Naive thymus-derived CD8-positive, alpha-beta T cell (primary cell): ENCODE measurements at regions of chr1 and their contacts with region 1.

Region 1: DNA sequence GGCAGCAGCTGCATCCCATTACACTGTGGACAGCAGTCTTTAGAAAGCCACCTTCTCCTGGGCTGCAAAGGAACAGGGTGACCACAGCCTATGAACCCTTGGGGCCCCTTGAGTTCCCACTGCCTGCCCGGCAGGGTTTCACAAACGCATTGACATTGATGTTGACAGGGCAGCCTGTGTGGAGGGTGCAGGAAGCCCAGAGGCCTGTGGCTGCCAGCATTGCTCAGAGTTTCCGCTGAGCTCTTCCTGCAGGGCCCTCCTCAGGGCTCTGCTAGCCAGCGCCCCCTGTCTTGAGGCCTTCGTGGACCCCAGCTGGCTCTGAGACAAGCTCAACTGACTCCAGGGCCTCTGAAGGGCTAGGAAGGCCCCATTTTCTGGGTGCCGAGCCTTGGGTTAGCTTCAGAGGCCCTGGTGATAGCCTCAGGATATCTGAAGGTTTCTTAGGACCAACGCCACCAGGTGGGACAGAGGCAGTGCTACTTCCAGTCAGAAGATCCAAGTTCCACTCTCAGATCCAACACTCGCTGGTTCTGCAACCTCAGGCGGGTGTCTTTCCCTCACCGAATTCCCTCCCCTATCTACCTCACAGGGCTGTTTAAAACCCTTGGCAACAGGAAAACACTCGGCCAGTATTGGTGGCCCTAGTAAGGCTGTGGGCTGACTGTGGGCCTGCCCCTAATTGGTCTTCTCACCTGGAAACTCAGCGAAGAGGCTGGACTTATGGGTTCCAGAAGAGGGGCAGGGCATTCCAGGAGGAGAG is 27.2 kb upstream of the EPS8L3 start:
- DNase-seq: peak; percentile 44 to 90 (median 70)
- ATAC-seq: peak; percentile 94 to 95
- H3K4me3 Mint-ChIP-seq: peak overlapping the region in 9 of 10 donors; percentile 28 to 70 (median 49)
- H3K27ac Mint-ChIP-seq: peak overlapping the region; percentile 80 to 91 (median 88)
- H3K4me1 Mint-ChIP-seq: peaks cover 19 to 69% (median 65%) of the 10 kb centered on the region in 4 donors
- H3K27me3 Mint-ChIP-seq: no peaks in the 10 kb centered on the region

Region 2: DNA sequence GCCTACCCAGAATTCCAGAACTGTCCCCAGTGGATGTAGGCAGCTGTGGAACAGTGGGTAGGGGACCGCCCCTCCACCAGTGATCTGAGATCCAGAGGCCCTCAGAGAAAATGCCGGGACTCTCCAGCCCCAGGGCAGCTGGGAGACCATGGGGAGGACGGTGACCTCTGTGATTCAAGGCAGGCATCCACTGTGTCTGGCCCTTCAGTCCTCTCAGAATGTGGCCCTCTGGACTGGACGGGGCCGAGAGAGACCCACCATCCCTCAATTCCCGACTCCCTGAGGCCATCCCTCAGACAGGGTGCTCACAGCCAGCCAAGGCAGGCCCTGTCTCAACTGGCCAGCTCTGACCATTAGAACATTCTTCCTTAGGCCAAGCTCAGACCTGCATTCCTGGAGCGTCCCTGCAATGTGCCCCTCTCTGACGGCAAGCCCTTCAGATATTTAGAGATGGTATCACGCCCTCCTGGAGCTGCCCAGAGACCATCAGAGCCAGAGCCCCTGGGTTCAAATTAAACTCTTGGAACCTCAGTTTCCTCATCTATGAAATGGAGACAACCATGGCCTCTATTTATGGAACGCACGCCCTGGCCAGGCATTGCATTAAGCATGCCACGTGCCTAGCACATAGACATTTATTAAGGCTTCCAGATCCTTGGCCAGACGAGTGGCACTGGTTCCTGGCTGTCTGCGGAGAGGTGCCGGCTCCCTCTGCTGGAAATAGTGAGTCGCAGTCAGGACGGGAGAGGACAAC is 17.6 kb before region 1 on chr1:
- POLR2A ChIA-PET with region 1: interaction called, 11 read pairs
- DNase-seq: peak; percentile 43 to 85 (median 67)
- ATAC-seq: peak; percentile 94 to 95
- H3K4me3 Mint-ChIP-seq: no peak overlapping the region
- H3K27ac Mint-ChIP-seq: peak overlapping the region in 2 of 10 donors; percentile 16 to 46
- H3K4me1 Mint-ChIP-seq: peaks cover 4 to 17% (median 8%) of the 10 kb centered on the region in 4 donors
- H3K27me3 Mint-ChIP-seq: peaks cover 0 to 23% (median 1%) of the 10 kb centered on the region in 5 donors

Region 3: GRCh38 chr1:109802901-109803561 is 12.1 kb after region 1 on chr1:
- POLR2A ChIA-PET with region 1: interaction called, 41 read pairs
- DNase-seq: no peak
- ATAC-seq: no peak
- H3K4me3 Mint-ChIP-seq: peak overlapping the region; percentile 42 to 85 (median 70)
- H3K27ac Mint-ChIP-seq: peak overlapping the region; percentile 29 to 93 (median 80)
- H3K4me1 Mint-ChIP-seq: peaks cover 24 to 78% (median 75%) of the 10 kb centered on the region in 4 donors
- H3K27me3 Mint-ChIP-seq: no peaks in the 10 kb centered on the region